Endothelial cell of umbilical vein (primary cell): ENCODE measurements at regions of chr1 and their contacts with region 1.

Region 1: GRCh38 chr1:223087291-223088255 is 55.5 kb downstream of the TLR5 start:
- DNase-seq: no peak
- H3K4me3 ChIP-seq: no peak overlapping the region
- H3K27ac ChIP-seq: no peak overlapping the region
- H3K4me1 ChIP-seq: no peaks in the 10 kb centered on the region
- H3K27me3 ChIP-seq: peaks cover 0 to 8% of the 10 kb centered on the region in 2 experiments
- CTCF ChIP-seq: no peak
- POLR2A ChIP-seq: no peak

Region 2: GRCh38 chr1:222750651-222751050 is 336.9 kb before region 1 on chr1:
- CTCF ChIA-PET with region 1: interaction called, 14 read pairs
- POLR2A ChIA-PET with region 1: no interaction called
- dilution Hi-C with region 1: no loop called
- intact Hi-C with region 1: no loop called
- DNase-seq: no peak
- H3K4me3 ChIP-seq: no peak overlapping the region
- H3K27ac ChIP-seq: no peak overlapping the region
- H3K4me1 ChIP-seq: no peaks in the 10 kb centered on the region
- H3K27me3 ChIP-seq: peaks cover 2 to 4% of the 10 kb centered on the region in 2 experiments
- CTCF ChIP-seq: no peak
- POLR2A ChIP-seq: no peak

Region 3: GRCh38 chr1:222798116-222798515 is 289.5 kb before region 1 on chr1:
- CTCF ChIA-PET with region 1: interaction called, 59 read pairs
- POLR2A ChIA-PET with region 1: no interaction called
- dilution Hi-C with region 1: loop called (anchors 25 kb)
- intact Hi-C with region 1: no loop called
- DNase-seq: peak; percentile 51
- H3K4me3 ChIP-seq: no peak overlapping the region
- H3K27ac ChIP-seq: no peak overlapping the region
- H3K4me1 ChIP-seq: no peaks in the 10 kb centered on the region
- H3K27me3 ChIP-seq: peaks cover 0 to 4% of the 10 kb centered on the region in 2 experiments
- CTCF ChIP-seq: no peak
- POLR2A ChIP-seq: no peak

Region 4: DNA sequence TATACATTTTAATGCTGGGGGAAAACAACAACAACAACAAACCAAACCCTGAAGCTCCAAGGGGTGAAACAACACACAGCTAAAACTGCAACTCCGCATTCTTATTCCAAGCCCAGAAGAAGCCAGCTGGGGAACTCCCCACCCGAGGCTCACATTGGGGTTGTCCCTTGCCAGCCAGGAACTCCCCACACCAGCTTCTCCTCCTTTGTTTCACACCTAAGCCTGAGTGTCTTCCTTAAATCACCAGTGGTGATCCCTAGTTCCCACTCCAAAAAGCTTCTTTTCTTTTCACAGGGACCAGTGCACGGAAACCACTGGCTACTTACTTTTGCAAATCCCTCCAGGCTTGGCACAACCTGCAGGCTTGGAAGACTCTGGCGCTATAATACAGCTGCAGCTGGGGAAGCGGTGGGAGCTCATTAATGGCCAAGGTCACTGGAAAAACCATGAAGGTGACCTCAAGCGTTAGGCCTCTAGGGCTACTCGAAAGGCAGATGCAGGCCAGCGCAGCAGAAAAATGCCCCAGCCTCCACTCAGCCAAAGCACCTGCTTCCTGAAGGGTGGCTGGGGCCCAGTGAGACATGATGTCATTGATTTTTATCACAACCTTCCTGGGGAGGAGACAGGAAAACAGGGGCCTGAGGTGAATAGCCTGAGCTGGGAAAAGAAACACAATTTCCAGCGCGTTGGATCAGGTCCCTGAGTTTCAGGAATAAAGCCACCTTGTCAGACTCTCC is 15.4 kb after region 1 on chr1:
- CTCF ChIA-PET with region 1: interaction called, 64 read pairs
- POLR2A ChIA-PET with region 1: interaction called, 4 read pairs
- dilution Hi-C with region 1: no loop called
- intact Hi-C with region 1: loop called (anchors 1 kb)
- DNase-seq: peak; percentile 98
- H3K4me3 ChIP-seq: peak overlapping the region in 1 of 3 experiments; percentile 9
- H3K27ac ChIP-seq: peak overlapping the region; percentile 75
- H3K4me1 ChIP-seq: peaks cover 26% of the 10 kb centered on the region
- H3K27me3 ChIP-seq: peaks cover 0 to 3% of the 10 kb centered on the region in 2 experiments
- CTCF ChIP-seq: no peak
- POLR2A ChIP-seq: no peak

Region 5: GRCh38 chr1:223199094-223199647 is 111.6 kb after region 1 on chr1:
- CTCF ChIA-PET with region 1: no interaction called
- POLR2A ChIA-PET with region 1: no interaction called
- dilution Hi-C with region 1: no loop called
- intact Hi-C with region 1: no loop called
- DNase-seq: no peak
- H3K4me3 ChIP-seq: no peak overlapping the region
- H3K27ac ChIP-seq: no peak overlapping the region
- H3K4me1 ChIP-seq: no peaks in the 10 kb centered on the region
- H3K27me3 ChIP-seq: no peaks in the 10 kb centered on the region
- CTCF ChIP-seq: no peak
- POLR2A ChIP-seq: no peak